OCI-LY7 (cell line): ENCODE measurements at regions of chr4 and their contacts with region 1.

Region 1: DNA sequence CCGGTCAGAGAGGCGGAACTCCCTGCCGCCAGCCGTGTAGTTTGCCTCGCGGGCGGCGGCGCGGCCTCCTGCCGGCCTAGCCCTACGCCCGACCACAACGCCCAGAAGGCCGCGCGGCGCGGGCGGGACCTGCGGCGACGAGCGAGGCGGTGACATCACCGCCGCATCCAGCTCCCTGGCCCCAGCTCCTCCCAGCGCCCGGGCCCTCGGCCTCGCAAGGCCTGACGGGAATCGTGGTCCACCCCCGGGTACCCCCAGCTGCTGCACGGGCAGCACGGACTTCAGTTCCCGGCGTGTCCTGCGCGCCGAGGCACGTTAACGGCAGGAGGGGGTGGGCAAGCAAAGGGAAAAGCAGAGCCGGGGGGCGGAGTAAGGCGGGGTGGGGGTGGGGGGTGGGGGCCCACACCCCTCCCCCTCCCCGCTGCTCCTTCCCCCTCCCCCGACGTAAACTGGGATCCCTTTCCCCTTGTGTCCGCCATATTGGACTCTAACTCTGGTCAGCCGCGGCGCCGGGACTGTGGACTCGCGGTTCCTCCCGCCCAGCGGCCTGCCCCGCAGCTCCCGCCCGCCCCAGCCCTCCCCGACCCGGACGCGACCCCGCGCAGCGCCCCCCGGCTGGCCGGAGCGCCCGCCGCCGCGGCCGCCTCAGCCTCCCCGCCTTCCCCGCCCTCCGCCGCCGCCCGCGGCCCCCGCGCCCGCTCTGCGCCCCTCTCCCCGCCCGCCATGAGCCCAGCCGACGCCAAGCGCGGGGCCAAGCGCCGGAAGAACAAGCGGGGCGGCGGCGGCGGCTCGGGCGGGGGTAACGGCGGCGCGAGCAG is at the start of gene FAM193A:
- DNase-seq: peak; percentile 100
- H3K4me3 ChIP-seq: peak within 1 kb of the TSS; percentile 95
- H3K27ac ChIP-seq: peak within 1 kb of the TSS; percentile 68
- H3K4me1 ChIP-seq: peaks cover 15% of the 10 kb centered on the region
- CTCF ChIP-seq: no peak
- total RNA-seq, gene FAM193A: 17.1 and 17.8 TPM in 2 replicates

Region 2: GRCh38 chr4:2441393-2442174 is 94.8 kb before region 1 on chr4:
- CTCF ChIA-PET with region 1: no interaction called
- POLR2A ChIA-PET with region 1: no interaction called
- intact Hi-C with region 1: loop called (anchors 1 kb)
- DNase-seq: peak; percentile 90
- H3K4me3 ChIP-seq: no peak overlapping the region
- H3K27ac ChIP-seq: no peak overlapping the region
- H3K4me1 ChIP-seq: peaks cover 8% of the 10 kb centered on the region
- CTCF ChIP-seq: peak; percentile 99

Region 3: DNA sequence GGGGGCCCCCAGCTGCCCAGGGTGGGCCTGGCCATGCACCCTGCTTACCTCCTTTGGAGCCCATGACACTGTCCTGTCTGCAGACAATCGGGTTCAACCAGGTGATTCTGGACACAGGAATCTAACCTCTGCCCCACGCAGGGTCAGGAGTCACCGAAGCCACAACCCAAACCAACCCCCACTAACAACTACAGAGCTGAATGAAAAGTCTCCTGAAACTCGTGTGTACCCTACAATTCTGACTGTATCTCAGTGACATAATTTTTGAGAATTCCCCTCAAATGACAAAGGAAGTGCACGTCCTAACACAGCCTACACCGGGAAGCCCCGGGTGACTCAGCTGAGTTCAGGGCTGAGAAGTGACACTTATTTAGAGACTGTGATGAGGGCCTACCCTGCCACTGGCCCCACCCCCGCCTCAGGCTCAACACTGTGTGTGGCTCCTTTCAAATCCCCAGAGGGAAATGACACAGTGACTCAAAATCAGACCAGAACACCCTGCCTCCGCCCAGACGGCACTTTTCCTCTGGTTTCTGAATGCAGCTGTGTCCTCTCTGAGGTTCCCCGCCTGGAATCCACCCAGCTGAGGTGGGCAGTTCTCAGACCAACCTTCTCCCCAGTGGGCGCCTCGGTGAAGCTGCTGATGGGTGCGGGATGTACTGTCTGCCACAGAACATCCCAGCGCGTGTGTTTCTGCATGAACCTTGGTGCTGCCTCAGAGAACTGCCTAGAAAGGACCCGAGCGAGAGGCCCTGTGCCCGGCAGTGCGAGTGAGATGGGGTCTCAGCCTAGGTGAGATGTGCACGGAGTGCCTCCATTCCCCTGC is 209.8 kb after region 1 on chr4:
- CTCF ChIA-PET with region 1: no interaction called
- POLR2A ChIA-PET with region 1: no interaction called
- intact Hi-C with region 1: loop called (anchors 2 kb)
- DNase-seq: peak; percentile 79
- H3K4me3 ChIP-seq: no peak overlapping the region
- H3K27ac ChIP-seq: peak overlapping the region; percentile 37
- H3K4me1 ChIP-seq: peaks cover 36% of the 10 kb centered on the region
- CTCF ChIP-seq: no peak

Region 4: DNA sequence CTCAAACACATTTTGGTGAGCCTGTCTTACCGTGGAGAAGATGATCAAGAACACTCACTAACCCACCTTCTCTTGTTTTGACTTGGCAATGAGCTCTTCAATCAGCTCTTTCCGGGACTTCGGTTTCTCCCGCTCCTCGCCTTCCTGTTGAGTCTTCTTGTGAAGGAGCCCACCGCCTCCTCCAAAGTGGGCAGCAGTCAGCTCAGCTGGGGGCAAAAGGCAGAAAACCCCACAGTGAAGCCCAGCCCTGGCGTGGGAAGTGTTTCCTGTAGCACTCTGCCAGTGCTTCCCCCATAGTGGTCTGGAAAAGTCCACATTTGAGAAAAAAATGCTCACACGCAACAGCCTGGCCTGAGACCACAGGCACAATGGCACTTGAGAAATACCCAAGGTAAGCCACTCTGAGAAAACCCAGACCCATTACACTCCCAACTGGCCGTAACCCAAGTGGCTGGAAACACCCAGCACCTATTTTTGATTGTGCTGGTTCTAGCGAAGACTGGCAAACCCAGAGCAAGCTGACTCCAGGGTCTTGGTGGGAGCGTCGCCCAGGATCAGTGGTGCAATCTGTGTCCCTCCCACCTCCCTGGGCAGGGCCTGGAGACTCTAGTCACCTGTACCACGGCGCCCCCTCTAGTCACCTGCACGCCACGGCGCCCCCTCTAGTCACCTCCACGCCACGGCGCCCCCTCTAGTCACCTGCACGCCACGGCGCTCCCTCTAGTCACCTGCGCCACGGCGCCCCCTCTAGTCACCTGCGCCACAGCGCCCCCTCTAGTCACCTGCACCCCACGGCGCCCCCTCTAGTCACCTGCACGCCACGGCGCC is 418.2 kb after region 1 on chr4:
- CTCF ChIA-PET with region 1: no interaction called
- POLR2A ChIA-PET with region 1: no interaction called
- intact Hi-C with region 1: loop called (anchors 2 kb)
- DNase-seq: peak; percentile 53
- H3K4me3 ChIP-seq: no peak overlapping the region
- H3K27ac ChIP-seq: peak overlapping the region; percentile 2
- H3K4me1 ChIP-seq: no peaks in the 10 kb centered on the region
- CTCF ChIP-seq: no peak